ENCODE measurements at regions of chr9 and their contacts with region 1.

Region 1: GRCh38 chr9:98207606-98208005 is 15.2 kb upstream of the CORO2A start:
- DNase-seq: no peak
- ATAC-seq: no peak

Region 2: DNA sequence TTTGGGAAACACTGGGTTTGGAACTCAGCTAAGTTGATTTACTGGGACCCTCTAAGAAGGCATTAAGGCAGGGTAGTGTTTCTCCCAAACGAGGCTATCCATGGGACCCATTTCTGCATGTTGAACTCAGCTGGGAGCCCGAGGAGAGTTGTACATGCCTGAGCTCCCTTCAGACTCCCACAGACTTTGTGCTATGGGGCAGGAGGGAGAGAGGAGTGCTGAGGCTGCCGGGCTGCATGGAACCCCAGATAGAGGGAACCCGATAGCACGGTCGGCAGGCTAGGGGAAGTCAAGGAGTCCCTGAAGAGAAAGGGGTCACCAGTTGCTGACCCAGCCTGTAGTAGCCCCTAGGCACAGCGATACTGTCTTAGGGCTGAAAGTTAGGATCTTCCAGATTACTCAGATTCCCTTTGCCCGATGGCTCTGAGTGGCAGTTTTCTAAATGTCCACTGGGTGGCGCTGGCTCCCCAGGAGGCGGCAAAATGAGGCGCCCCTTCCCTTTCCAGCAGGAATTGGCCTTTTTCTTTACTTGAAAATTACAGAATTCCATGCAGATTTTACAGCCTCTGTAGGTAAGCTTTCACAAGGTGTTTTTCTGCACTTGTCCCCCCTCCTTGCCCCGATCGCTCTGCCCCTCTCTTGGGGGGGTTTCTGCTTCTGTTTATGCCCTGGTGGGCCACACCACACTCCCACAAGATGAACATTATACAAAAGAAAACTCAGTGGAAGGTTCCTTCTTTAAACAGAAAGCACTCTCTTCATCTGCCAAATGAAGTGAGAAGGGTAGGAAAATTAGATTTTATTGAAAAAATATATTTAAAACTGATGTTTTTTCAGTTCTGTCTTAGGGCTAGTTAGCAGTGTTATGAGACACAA is 133.3 kb before region 1 on chr9:
- intact Hi-C with region 1: loop called in 1 of 2 experiments (anchors 10 kb)
- DNase-seq: peak; percentile 41
- ATAC-seq: peak; percentile 44 to 71